CD14-positive monocyte (primary cell): ENCODE measurements at regions of chr11 and their contacts with region 1.

Region 1: GRCh38 chr11:4072668-4073285 is 21.8 kb upstream of the RRM1 start:
- DNase-seq: peak; percentile 67 to 78 (median 76)
- H3K4me3 ChIP-seq: no peak overlapping the region
- H3K4me3 Mint-ChIP-seq: no peak overlapping the region
- H3K27ac ChIP-seq: peak overlapping the region in 1 of 2 donors; percentile 6
- H3K27ac Mint-ChIP-seq: peak overlapping the region in 2 of 7 donors; percentile 2 to 54
- H3K4me1 ChIP-seq: peaks cover 14 to 15% of the 10 kb centered on the region in 2 donors
- H3K4me1 Mint-ChIP-seq: peaks cover 20% of the 10 kb centered on the region
- H3K27me3 ChIP-seq: no peaks in the 10 kb centered on the region
- H3K27me3 Mint-ChIP-seq: no peaks in the 10 kb centered on the region
- CTCF ChIP-seq: peak; percentile 82

Region 2: GRCh38 chr11:3849297-3849874 is 223.4 kb before region 1 on chr11:
- intact Hi-C with region 1: loop called (anchors 2 to 5 kb)
- DNase-seq: peak; percentile 48 to 58 (median 57)
- H3K4me3 ChIP-seq: no peak overlapping the region
- H3K4me3 Mint-ChIP-seq: no peak overlapping the region
- H3K27ac ChIP-seq: no peak overlapping the region
- H3K27ac Mint-ChIP-seq: no peak overlapping the region
- H3K4me1 ChIP-seq: peaks cover 10 to 13% of the 10 kb centered on the region in 2 donors
- H3K4me1 Mint-ChIP-seq: peaks cover 14% of the 10 kb centered on the region
- H3K27me3 ChIP-seq: no peaks in the 10 kb centered on the region
- H3K27me3 Mint-ChIP-seq: peaks cover 0 to 4% (median 0%) of the 10 kb centered on the region in 3 donors
- CTCF ChIP-seq: peak; percentile 83

Region 3: GRCh38 chr11:4134844-4135243 is 62.1 kb after region 1 on chr11:
- intact Hi-C with region 1: no loop called
- DNase-seq: no peak
- H3K4me3 ChIP-seq: no peak overlapping the region
- H3K4me3 Mint-ChIP-seq: no peak overlapping the region
- H3K27ac ChIP-seq: no peak overlapping the region
- H3K27ac Mint-ChIP-seq: no peak overlapping the region
- H3K4me1 ChIP-seq: no peaks in the 10 kb centered on the region
- H3K4me1 Mint-ChIP-seq: no peaks in the 10 kb centered on the region
- H3K27me3 ChIP-seq: no peaks in the 10 kb centered on the region
- H3K27me3 Mint-ChIP-seq: peaks cover 0 to 3% (median 0%) of the 10 kb centered on the region in 3 donors
- CTCF ChIP-seq: no peak

Region 4: GRCh38 chr11:4156571-4156970 is 83.8 kb after region 1 on chr11:
- intact Hi-C with region 1: no loop called
- DNase-seq: no peak
- H3K4me3 ChIP-seq: no peak overlapping the region
- H3K4me3 Mint-ChIP-seq: no peak overlapping the region
- H3K27ac ChIP-seq: no peak overlapping the region
- H3K27ac Mint-ChIP-seq: no peak overlapping the region
- H3K4me1 ChIP-seq: no peaks in the 10 kb centered on the region
- H3K4me1 Mint-ChIP-seq: no peaks in the 10 kb centered on the region
- H3K27me3 ChIP-seq: no peaks in the 10 kb centered on the region
- H3K27me3 Mint-ChIP-seq: peaks cover 0 to 5% (median 2%) of the 10 kb centered on the region in 3 donors
- CTCF ChIP-seq: no peak